Gastrocnemius medialis (tissue), 4 donors: ENCODE measurements at regions of chr2 and their contacts with region 1.

Region 1: DNA sequence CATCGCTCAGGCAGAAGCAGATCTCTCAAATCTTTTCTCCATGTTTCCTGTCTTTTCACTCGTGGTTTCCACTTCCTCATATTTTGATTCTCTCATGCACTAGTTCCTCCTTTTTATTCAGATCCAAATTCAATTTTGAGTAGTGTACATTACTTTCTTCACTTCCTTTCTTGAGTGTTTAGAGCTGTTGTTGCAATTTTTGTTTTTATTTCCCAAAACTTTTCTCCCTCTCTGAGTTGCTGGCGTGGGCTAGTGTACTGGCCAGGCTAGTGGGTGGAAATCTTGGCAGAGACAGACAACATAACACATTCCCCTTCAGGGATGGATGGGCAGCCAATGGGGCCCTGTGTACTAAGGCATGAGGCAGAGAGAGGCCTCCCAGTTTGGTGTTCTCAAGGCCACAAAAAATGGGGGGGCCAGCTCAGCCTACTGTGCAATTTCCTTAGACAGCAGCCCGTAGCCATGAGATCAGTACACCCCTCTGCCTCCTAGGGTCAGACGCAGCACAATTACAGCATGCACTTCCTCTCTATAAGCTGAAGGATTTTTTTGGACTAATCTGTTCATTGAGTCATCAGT is 145.1 kb upstream of the PID1 start:
- DNase-seq: peak; percentile 75 to 85
- ATAC-seq: peak; percentile 79 to 83
- H3K4me3 ChIP-seq: no peak overlapping the region
- H3K27ac ChIP-seq: peak overlapping the region; percentile 38 to 69 (median 56)
- H3K4me1 ChIP-seq: no peaks in the 10 kb centered on the region
- H3K27me3 ChIP-seq: no peaks in the 10 kb centered on the region
- CTCF ChIP-seq: no peak
- POLR2A ChIP-seq: peak in 1 of 2 donors; percentile 38

Region 2: DNA sequence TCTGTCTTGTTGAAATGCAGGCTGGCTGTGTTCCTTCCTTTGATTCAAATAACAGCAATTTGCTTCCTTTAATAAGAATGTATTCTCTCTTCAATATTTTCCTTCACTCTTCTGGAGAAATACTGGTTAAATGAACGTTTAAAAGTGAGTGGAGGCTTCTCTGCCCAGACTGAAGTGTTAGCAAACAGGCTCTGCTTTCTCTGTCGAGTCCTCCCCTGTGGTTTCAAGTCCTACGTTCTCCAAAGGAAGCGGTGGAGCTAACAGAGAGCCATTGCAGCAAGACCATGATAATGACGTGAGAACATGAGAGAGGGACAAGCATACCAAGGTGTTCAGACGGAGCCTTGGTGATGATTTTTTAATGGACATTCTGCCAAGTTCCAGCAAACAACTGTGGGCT is 119.0 kb before region 1 on chr2:
- in situ Hi-C with region 1: no loop called
- intact Hi-C with region 1: loop called (anchors 10 kb)
- DNase-seq: no peak
- ATAC-seq: peak; percentile 57 to 72
- H3K4me3 ChIP-seq: no peak overlapping the region
- H3K27ac ChIP-seq: no peak overlapping the region
- H3K4me1 ChIP-seq: no peaks in the 10 kb centered on the region
- H3K27me3 ChIP-seq: no peaks in the 10 kb centered on the region
- CTCF ChIP-seq: no peak
- POLR2A ChIP-seq: no peak